ENCODE measurements at regions of chr5 and their contacts with region 1.

Region 1: DNA sequence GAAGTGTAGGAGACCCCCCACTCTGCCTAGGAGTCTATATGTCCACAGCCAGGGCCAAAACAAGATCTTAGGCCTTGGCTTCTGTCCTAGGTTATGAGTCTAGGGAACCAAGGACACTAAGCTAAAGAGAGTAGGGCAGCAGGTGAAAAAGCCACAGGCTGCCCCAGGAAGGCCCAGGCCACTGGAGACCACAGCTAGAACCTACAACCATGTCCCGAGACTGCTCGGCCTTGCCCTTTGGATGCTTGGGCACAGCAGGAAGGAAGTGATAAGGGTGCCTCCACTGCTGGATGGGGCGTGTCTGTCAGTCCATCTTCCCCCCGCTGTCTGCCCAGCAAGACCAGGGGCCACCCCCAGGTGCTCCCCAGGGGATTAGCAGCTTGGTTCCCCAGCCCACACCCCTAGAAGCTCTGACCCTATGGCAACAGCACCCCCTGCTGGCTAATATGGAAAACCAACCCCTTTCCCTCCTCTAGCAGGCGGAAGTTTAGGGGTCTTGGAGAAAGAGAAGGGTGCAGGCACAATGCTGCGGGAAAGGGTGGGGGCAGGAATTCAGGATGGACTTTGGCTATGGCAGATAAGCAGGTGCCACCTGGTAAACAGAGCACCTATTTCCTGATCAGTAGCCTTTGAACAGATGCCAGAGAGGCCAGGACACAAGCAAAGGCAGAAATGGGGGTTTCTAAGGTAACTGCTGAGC is 10.5 kb upstream of the IRF1 start:
- DNase-seq: peak; percentile 84
- CTCF ChIP-seq: peak; percentile 71

Region 2: DNA sequence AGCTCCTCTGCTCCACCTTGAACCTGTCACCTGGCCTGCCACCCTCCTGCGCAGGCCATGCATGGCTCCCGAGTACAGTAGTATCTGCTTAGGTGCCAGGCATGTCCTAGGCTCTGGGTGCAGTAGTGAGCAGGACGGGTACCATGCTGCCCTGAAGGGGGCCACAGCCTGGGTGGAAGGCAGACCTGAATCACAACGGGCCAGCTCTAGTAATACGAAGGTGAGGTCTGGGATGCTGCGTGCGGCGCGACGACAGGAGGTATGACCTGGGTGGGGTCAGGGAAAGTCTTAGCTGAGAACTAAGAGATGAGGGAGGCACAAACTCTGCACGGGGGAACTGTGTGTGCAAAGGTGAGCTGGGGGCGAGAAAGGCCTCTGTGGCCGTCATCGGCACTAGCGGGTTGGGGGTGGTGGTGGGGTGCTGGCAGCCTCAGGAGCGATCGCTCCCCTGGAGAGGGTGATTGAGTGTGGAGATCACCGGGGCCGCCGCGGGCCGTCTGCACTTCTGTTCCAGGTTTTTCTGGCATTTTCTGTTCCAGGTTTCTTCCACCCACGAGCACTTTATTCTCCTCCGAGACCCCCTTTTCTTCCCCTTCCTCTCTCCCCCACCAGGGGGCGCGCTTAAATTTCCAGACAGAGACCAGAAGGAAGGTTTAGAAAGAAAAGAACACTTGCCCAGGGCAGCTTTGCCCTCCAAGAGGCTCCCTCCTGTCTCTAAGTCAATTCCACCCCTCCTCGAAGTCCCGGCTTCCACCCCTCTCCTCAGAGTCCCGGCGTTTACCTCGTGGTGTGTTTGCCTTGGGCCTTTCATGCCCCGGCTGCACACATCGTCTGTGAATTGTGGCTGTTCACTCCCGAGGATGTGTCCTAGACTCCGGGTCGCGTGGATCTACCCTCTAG is 228.5 kb before region 1 on chr5:
- CTCF ChIA-PET with region 1: interaction called, 10 read pairs
- POLR2A ChIA-PET with region 1: no interaction called
- DNase-seq: peak; percentile 70
- CTCF ChIP-seq: peak; percentile 71

Region 3: GRCh38 chr5:132310141-132310834 is 190.8 kb before region 1 on chr5:
- CTCF ChIA-PET with region 1: no interaction called
- POLR2A ChIA-PET with region 1: no interaction called
- DNase-seq: no peak
- CTCF ChIP-seq: no peak

Region 4: GRCh38 chr5:132386644-132387286 is 114.3 kb before region 1 on chr5:
- CTCF ChIA-PET with region 1: interaction called, 255 read pairs
- POLR2A ChIA-PET with region 1: no interaction called
- DNase-seq: peak; percentile 87
- CTCF ChIP-seq: peak; percentile 89

Region 5: DNA sequence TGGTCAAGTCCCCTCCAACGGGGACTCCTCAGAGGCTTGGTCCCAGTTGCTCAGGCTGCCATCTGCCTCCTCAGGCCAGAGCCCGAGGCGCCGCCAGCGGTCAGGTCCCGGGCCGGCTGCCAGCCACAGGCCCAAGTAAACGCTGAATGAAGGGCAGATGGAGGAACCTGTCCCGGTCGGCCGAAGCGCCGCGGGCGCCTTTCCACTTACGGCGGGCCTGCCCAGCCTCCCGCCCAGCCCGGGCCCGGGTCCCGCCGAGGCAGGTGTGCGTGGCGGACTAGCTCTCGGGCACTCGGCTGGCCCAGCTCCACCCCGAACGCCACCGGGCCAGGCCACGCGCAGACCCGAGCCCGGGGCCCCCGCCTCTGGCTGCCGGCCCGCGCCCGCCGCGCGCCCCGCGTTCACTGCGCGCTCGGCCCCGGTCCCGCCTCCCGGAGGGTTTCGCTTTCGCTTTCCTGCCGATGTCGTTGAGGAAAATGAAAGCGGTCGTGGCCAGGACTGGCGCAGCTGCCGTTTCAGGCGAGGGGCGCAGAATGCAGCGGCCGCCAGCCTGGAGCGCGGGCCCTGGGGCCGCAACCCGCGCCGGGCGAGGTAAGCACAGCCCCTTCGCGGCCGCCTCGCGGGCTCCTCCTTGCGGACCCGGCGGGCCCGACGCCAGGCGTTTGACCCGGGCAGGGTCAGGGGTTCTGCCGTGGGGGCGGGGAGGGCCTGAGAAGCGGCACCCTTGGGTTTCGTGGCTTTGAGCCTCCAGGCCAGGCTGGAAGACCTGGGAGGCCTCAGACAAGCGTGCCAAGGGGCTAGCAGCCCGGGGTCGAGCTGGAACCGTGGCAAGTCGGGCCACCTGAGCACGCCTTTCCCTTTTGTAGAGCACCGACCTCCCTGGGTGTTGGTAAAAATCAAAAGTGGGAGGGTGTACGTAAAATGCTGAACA is 90.4 kb before region 1 on chr5:
- CTCF ChIA-PET with region 1: interaction called, 19 read pairs
- POLR2A ChIA-PET with region 1: no interaction called
- DNase-seq: peak; percentile 86
- CTCF ChIP-seq: peak; percentile 47

Region 6: GRCh38 chr5:132466433-132467286 is 34.4 kb before region 1 on chr5:
- CTCF ChIA-PET with region 1: interaction called, 15 read pairs
- POLR2A ChIA-PET with region 1: no interaction called
- DNase-seq: peak; percentile 73
- CTCF ChIP-seq: no peak

Region 7: GRCh38 chr5:132479111-132479951 is 21.8 kb before region 1 on chr5:
- CTCF ChIA-PET with region 1: interaction called, 12 read pairs
- POLR2A ChIA-PET with region 1: interaction called, 12 read pairs
- DNase-seq: no peak
- CTCF ChIP-seq: no peak

Region 8: DNA sequence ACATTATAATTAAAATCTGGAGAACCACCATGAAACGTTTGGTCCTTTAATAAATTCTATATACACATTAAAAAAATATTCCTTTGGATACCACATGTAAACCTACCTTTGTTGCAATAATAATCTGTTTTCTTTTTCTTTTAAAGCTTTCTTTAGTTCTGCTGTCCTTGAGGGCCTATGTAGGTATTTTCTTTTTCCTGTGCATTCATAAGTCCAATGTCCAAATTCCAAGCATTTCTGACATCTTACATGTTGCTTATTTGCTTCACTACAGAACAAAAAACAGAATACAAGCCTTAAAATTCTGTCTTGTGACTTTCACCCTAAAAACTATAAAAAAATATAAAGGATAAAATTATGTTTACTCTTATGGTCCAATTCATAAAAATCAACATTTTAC is 505.6 kb after region 1 on chr5:
- CTCF ChIA-PET with region 1: no interaction called
- POLR2A ChIA-PET with region 1: no interaction called
- DNase-seq: no peak
- CTCF ChIP-seq: no peak

Measured in GM10248 (cell line).